ENCODE measurements at regions of chr15 and their contacts with region 1.

Region 1: GRCh38 chr15:88834211-88834812 is 31.1 kb downstream of the ACAN start:
- DNase-seq: peak; percentile 58 to 83 (median 74)
- H3K4me3 ChIP-seq: no peak overlapping the region
- H3K27ac ChIP-seq: peak overlapping the region in 1 of 2 donors; percentile 17
- H3K4me1 ChIP-seq: no peaks in the 10 kb centered on the region
- H3K27me3 ChIP-seq: no peaks in the 10 kb centered on the region
- CTCF ChIP-seq: peak; percentile 42 to 68 (median 50)
- EP300 ChIP-seq: no peak
- POLR2A ChIP-seq: no peak

Region 2: GRCh38 chr15:88476635-88477060 is 357.7 kb before region 1 on chr15:
- intact Hi-C with region 1: loop called in 1 of 4 experiments (anchors 10 kb)
- DNase-seq: peak; percentile 35 to 48 (median 41)
- H3K4me3 ChIP-seq: no peak overlapping the region
- H3K27ac ChIP-seq: peak overlapping the region in 1 of 2 donors; percentile 12
- H3K4me1 ChIP-seq: no peaks in the 10 kb centered on the region
- H3K27me3 ChIP-seq: no peaks in the 10 kb centered on the region
- CTCF ChIP-seq: peak; percentile 25 to 60 (median 33)
- EP300 ChIP-seq: no peak
- POLR2A ChIP-seq: no peak

Region 3: DNA sequence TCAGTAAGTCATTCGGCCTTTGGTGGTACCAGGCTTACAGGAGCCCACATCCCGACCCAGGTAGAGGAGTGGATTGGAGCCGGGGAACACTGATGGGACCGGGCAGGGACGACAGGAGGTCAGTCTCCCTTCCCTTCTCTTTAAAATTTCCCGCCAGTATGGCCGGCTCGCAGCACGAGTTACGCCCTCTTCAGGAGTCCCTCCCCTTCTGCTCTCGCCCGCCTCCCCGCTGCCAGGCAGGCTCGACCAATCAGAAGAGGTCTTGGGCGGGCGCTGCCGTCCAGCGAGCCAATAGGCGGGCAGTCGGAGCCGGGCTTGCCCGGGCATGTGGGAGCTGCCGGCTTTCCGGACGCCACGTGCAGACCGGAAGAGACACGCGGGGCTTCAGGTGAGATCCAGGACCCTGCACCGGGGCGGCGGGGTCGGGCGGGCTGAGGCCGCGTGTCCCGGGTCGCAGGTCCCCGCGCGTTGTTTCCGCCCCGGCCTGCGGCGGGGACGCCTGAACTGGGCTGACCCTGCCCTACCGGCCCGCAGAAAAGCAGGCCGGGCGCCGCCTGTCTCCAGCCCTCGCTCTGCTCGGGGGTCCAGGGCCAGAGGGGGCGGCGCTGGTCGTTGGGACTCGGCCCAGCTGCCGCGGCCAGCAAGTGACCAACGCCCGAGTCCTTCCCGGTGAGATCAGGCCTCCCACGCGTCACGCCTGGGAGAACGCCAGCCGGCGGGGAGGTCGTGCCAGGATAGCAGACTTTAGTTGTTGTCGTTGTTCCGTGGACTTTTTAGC is 213.1 kb before region 1 on chr15 and contains the start of gene AEN:
- intact Hi-C with region 1: loop called in 2 of 4 experiments (anchors 10 kb)
- DNase-seq: peak; percentile 95 to 96 (median 95)
- H3K4me3 ChIP-seq: peak within 1 kb of the TSS; percentile 96
- H3K27ac ChIP-seq: peak within 1 kb of the TSS; percentile 65 to 88
- H3K4me1 ChIP-seq: peaks cover 4% of the 10 kb centered on the region
- H3K27me3 ChIP-seq: no peaks in the 10 kb centered on the region
- CTCF ChIP-seq: peak in 2 of 3 donors; percentile 26 to 27
- EP300 ChIP-seq: no peak
- POLR2A ChIP-seq: peak; percentile 37
- total RNA-seq, gene AEN: 11.3 to 27.1 (median 16.9) TPM

Region 4: DNA sequence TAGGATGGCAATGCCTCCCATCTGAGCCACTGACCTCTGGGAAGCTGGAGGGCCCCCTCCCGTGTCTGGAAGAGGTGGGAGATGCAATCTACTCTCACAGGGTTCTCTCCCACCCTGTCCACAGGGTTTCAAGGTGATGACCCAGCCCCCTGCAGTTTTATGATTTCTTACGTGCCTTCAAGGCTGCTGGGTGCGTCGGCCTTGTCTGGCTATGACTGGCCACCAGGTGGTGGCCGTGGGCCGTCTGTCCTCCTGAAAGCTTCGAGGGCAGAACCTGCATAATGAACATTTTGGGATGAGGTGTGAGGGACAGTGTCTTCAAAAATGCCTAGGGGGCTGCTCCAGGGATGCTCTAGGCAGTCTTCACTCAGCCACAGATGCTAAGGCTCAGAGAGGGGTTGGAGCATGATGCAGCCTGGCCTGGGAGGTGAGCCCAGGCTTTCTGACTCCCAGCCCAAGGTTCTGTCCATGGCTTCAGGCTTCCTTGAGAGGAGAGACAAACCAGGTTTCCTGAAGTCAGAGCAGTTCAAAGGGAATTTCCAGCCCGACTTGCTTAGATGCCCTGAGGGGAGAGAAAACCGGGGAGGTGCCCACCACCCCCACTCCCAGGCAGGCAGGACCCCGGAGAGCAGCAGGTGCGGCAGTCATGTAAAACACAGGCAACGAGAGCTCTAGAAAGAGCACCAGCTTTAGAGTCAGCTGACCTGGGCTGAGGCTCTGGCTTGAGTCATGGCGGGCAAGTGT is 176.8 kb before region 1 on chr15:
- intact Hi-C with region 1: loop called (anchors 5 to 10 kb)
- DNase-seq: peak in 4 of 5 donors; percentile 49 to 70 (median 54)
- H3K4me3 ChIP-seq: no peak overlapping the region
- H3K27ac ChIP-seq: no peak overlapping the region
- H3K4me1 ChIP-seq: no peaks in the 10 kb centered on the region
- H3K27me3 ChIP-seq: no peaks in the 10 kb centered on the region
- CTCF ChIP-seq: peak; percentile 30 to 72 (median 57)
- EP300 ChIP-seq: no peak
- POLR2A ChIP-seq: no peak

Region 5: DNA sequence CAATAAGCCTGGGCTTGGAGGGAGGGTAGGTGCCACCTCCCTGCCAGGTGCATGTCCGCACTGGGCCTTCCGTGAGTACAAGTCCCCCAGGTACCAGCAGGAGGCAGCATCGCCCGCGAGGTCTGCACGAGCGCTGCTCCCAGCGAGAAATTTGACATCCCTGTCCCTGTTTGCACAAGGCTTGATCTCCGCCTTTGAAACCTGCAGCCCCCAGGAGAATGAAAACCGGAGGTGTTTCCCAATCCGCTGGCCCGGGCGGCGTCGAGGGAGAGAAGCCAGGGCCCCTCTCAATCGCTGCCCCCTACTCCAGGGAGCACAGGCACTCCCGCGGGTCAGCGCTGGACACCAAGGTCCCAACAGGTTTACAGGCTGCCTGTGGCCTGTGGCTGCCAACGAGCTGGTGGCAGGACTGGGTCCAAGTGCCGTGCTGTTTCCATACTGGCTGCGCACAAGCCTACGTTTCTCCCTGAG is 60.1 kb after region 1 on chr15:
- intact Hi-C with region 1: no loop called
- DNase-seq: peak in 4 of 5 donors; percentile 39 to 67 (median 58)
- H3K4me3 ChIP-seq: peak overlapping the region; percentile 33
- H3K27ac ChIP-seq: no peak overlapping the region
- H3K4me1 ChIP-seq: peaks cover 9% of the 10 kb centered on the region
- H3K27me3 ChIP-seq: no peaks in the 10 kb centered on the region
- CTCF ChIP-seq: no peak
- EP300 ChIP-seq: no peak
- POLR2A ChIP-seq: no peak

Region 6: DNA sequence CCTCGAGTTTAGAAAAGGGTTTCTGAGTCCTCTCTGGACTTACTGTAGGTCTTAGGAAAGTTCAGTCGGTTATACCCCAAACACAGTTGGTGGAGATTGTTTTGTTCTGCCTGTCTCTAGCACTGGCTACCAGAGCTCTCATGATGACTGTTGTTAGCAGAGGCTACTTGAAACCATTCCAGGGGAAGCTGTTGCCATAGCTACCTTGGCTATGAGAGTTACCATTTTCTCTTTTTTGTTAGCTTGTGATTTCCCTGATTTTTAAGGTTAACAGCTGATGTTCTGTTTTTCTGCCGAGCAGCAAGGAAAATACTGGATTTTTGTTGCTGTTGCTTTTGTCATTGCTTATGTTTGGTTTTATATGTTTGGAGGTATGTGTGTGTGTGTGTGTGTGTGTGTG is 280.7 kb after region 1 on chr15:
- intact Hi-C with region 1: no loop called
- DNase-seq: peak in 3 of 5 donors; percentile 54 to 74 (median 66)
- H3K4me3 ChIP-seq: no peak overlapping the region
- H3K27ac ChIP-seq: peak overlapping the region in 1 of 2 donors; percentile 12
- H3K4me1 ChIP-seq: peaks cover 6% of the 10 kb centered on the region
- H3K27me3 ChIP-seq: no peaks in the 10 kb centered on the region
- CTCF ChIP-seq: no peak
- EP300 ChIP-seq: no peak
- POLR2A ChIP-seq: no peak

Measured in ovary (tissue), 10 donors.